CD8-positive, alpha-beta T cell (primary cell): ENCODE measurements at regions of chr3 and their contacts with region 1.

Region 1: DNA sequence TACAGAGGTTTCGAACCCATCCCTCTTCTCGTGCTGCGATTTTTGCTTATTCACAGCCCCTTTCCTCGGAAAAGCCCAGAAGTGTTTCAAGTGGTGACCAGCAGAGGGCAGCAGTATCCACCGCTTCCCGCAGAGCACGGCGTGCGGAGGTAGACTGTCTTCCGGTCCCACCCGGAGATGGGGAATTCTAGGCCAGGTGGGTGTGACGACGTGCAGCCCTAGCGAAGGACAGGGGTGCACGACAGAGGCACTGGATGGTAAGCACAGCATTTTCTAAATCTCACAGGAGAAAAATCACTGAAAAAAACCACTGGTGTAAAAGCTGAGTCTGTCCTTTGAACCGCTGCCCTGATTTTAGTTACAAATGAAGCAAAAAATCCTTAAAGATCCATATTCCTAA is 7.4 kb upstream of the PSMD6 start:
- DNase-seq: peak; percentile 42 to 92 (median 77)
- ATAC-seq: peak; percentile 98
- H3K4me3 ChIP-seq: peak overlapping the region; percentile 14 to 31
- H3K4me3 Mint-ChIP-seq: peak overlapping the region; percentile 84
- H3K27ac ChIP-seq: no peak overlapping the region
- H3K27ac Mint-ChIP-seq: peak overlapping the region; percentile 82
- H3K4me1 ChIP-seq: no peaks in the 10 kb centered on the region
- H3K4me1 Mint-ChIP-seq: peaks cover 6% of the 10 kb centered on the region
- H3K27me3 ChIP-seq: no peaks in the 10 kb centered on the region
- H3K27me3 Mint-ChIP-seq: peaks cover 22% of the 10 kb centered on the region
- CTCF ChIP-seq: peak; percentile 93

Region 2: GRCh38 chr3:64399205-64399800 is 368.6 kb after region 1 on chr3:
- CTCF ChIA-PET with region 1: no interaction called
- POLR2A ChIA-PET with region 1: no interaction called
- intact Hi-C with region 1: loop called (anchors 2 kb)
- DNase-seq: peak in 2 of 9 experiments; percentile 4 to 10
- ATAC-seq: no peak
- H3K4me3 ChIP-seq: no peak overlapping the region
- H3K4me3 Mint-ChIP-seq: no peak overlapping the region
- H3K27ac ChIP-seq: no peak overlapping the region
- H3K27ac Mint-ChIP-seq: no peak overlapping the region
- H3K4me1 ChIP-seq: no peaks in the 10 kb centered on the region
- H3K4me1 Mint-ChIP-seq: no peaks in the 10 kb centered on the region
- H3K27me3 ChIP-seq: no peaks in the 10 kb centered on the region
- H3K27me3 Mint-ChIP-seq: no peaks in the 10 kb centered on the region
- CTCF ChIP-seq: no peak

Region 3: DNA sequence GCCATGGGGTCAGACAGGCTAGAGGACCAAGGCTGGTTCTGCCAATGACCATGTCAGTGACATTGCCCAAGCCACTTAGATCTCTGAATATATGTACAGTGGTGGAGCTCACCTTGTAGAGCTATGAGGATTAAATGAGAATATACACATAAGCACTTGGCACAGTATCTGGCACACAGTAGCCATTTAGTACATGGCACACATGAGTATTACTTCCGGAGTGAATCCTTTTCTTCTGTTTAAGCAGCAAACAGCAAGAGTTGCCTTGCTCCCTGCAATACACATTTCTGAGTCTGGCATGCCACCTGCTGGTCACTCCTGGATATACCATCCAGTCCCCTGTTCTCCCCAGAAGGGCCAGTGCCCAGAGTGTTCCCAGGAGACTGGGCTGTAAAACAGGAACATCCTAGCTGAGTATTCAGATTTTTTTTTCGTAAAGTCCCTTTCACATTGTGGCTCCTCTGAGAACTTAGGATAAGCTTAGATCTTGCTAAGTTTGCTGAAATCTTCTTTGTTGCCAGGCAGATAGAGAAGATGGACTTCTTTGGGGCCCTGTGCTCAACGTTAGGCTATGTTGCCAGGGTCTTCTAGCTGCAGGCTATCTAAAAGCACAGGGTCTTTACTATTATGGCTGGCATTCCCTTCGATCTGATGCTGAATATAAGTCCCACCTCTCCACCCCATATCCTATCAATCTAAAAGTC is 453.7 kb after region 1 on chr3:
- CTCF ChIA-PET with region 1: interaction called, 45 read pairs
- POLR2A ChIA-PET with region 1: no interaction called
- intact Hi-C with region 1: loop called (anchors 1 kb)
- DNase-seq: peak; percentile 9 to 65 (median 54)
- ATAC-seq: peak; percentile 73
- H3K4me3 ChIP-seq: no peak overlapping the region
- H3K4me3 Mint-ChIP-seq: no peak overlapping the region
- H3K27ac ChIP-seq: no peak overlapping the region
- H3K27ac Mint-ChIP-seq: no peak overlapping the region
- H3K4me1 ChIP-seq: no peaks in the 10 kb centered on the region
- H3K4me1 Mint-ChIP-seq: peaks cover 2% of the 10 kb centered on the region
- H3K27me3 ChIP-seq: no peaks in the 10 kb centered on the region
- H3K27me3 Mint-ChIP-seq: peaks cover 13% of the 10 kb centered on the region
- CTCF ChIP-seq: peak; percentile 44

Region 4: DNA sequence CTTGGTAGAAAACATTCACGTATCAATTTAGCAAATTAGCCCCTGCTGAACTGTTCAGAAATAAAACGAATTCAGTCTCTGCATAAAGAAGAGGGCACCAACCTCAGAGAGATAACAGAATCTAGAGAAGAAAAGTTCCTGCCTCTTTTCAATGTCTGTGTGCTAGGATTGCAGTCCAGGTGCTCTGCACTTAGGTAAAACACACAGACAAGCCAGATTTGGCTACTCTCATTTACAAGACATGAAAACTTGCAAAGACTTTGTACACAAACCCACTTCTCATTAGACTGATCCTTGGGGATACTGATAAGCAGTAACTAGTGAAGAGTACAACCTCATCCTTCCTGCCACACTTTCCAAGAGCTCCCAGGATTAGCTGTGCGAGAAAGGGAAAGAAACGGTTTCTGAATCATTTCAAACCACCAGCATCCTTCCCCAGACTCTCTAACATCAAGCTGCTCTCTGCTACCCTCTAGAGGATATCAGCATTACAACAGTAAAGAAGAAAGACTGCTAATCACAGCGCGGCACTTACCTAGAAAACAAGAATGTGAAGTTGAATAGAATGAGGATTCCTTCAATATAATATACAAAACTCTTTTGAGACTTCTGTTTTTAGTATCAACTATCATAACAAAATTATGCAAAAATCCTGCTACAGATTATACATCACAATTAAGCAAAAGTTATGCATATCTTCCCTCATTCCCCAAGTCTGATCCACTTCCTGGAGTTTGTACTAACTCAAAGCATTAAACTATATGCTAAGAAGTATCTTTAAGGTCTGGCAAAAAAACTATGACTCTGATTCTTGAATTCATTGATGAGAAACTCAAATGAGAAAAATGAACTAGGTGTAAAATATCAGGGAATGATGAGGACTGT is 1701.6 kb after region 1 on chr3:
- CTCF ChIA-PET with region 1: interaction called, 3 read pairs
- POLR2A ChIA-PET with region 1: no interaction called
- intact Hi-C with region 1: loop called in 1 of 2 experiments (anchors 5 kb)
- DNase-seq: peak in 2 of 9 experiments; percentile 26 to 41
- ATAC-seq: peak; percentile 44
- H3K4me3 ChIP-seq: no peak overlapping the region
- H3K4me3 Mint-ChIP-seq: no peak overlapping the region
- H3K27ac ChIP-seq: no peak overlapping the region
- H3K27ac Mint-ChIP-seq: no peak overlapping the region
- H3K4me1 ChIP-seq: no peaks in the 10 kb centered on the region
- H3K4me1 Mint-ChIP-seq: peaks cover 4% of the 10 kb centered on the region
- H3K27me3 ChIP-seq: no peaks in the 10 kb centered on the region
- H3K27me3 Mint-ChIP-seq: peaks cover 7% of the 10 kb centered on the region
- CTCF ChIP-seq: peak; percentile 64